GM12878 (cell line): ENCODE measurements at regions of chr17 and their contacts with region 1.

Region 1: DNA sequence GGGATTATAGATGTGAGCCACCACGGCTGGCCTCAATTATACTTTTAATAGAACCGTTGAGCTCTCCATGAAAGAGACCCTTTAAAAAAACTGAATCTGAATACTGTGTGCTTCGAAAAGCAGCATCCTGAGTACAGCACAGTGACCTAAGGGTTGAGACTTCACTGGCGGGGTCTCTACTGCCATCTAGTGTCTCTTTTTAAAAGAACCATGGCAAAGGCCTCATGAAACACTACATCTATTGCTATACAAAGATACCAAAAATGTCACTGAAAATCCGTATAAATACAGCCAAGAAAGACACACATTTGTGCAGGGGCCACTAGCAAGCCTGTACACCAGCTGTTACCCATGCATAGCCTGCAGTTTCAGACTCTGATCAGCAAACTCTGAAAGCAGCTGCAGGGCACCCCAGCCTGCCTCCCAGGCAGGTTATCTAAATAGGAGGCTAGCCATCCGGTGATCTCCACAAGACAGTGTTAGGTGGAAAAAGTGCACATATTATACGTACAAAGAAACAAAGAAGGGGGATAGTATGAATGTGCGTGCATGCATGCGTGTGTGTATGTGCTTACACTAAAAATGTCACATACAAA is 35.3 kb downstream of the NPLOC4 start:
- DNase-seq: peak; percentile 20
- ATAC-seq: peak; percentile 83
- H3K4me3 ChIP-seq: no peak overlapping the region
- H3K27ac ChIP-seq: no peak overlapping the region
- H3K4me1 ChIP-seq: peaks cover 13% of the 10 kb centered on the region
- H3K27me3 ChIP-seq: no peaks in the 10 kb centered on the region
- CTCF ChIP-seq: peak; percentile 72 to 85 (median 73)
- EP300 ChIP-seq: no peak
- POLR2A ChIP-seq: no peak
- RAD21 ChIP-seq: peak; percentile 73

Region 2: GRCh38 chr17:81253358-81254131 is 348.1 kb before region 1 on chr17:
- CTCF ChIA-PET with region 1: interaction called, 10 read pairs
- POLR2A ChIA-PET with region 1: no interaction called
- RAD21 ChIA-PET with region 1: interaction called, 3 read pairs
- SMC1A ChIA-PET with region 1: interaction called, 4 read pairs
- in situ Hi-C with region 1: no loop called
- intact Hi-C with region 1: loop called (anchors 5 kb)
- DNase-seq: no peak
- ATAC-seq: peak; percentile 81
- H3K4me3 ChIP-seq: no peak overlapping the region
- H3K27ac ChIP-seq: no peak overlapping the region
- H3K4me1 ChIP-seq: no peaks in the 10 kb centered on the region
- H3K27me3 ChIP-seq: no peaks in the 10 kb centered on the region
- CTCF ChIP-seq: peak; percentile 60 to 85 (median 72)
- EP300 ChIP-seq: no peak
- POLR2A ChIP-seq: no peak
- RAD21 ChIP-seq: peak; percentile 70

Region 3: DNA sequence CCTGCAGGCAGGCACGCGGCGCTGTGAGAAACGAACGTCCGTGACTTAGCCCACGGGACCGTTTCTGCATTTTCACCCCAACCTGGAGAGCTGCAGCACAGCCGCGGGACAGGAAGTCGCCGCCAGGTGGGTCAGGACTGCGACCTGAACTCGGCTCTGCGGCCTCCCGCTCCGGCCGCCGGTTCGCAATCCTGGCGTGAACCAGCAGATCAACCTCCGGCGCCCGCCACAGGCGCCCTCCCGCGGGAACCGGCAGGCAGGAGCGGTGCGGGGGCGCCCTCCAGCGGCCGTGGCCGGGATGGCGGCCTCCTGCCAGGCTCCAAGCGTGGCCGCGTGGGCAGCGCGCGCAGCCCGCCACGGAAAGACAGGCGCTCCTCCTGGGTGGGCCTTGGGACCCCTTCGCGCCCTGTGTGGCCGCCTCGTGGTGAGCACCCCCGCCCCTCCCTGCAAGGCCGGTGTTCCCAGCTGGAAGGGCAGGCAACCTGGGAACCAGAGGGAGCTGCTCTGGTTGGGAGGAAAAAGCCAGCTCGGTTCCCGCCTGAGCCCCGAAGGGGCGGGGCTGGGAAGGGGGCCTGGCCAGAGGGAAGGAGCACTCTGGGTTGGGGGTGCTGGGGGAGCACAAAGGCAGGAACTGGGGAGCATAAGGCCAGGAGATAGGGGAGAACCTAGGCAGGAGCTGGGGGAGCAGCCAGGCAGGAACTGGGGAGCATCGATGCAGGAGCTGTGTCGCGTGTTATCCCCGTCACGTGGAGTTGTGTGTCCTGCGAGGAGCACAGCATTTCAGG is 117.2 kb before region 1 on chr17:
- CTCF ChIA-PET with region 1: interaction called, 28 read pairs
- POLR2A ChIA-PET with region 1: no interaction called
- RAD21 ChIA-PET with region 1: interaction called, 9 read pairs
- SMC1A ChIA-PET with region 1: interaction called, 21 read pairs
- in situ Hi-C with region 1: no loop called
- intact Hi-C with region 1: no loop called
- DNase-seq: peak; percentile 17
- ATAC-seq: peak; percentile 85
- H3K4me3 ChIP-seq: peak overlapping the region; percentile 46; the same call in 1 of the 2 replicates
- H3K27ac ChIP-seq: no peak overlapping the region
- H3K4me1 ChIP-seq: peaks cover 12% of the 10 kb centered on the region
- H3K27me3 ChIP-seq: peaks cover 7 to 8% of the 10 kb centered on the region in 2 experiments; a peak in 3 of 4 replicates
- CTCF ChIP-seq: peak; percentile 84 to 99 (median 94); a peak in 5 of 6 replicates
- EP300 ChIP-seq: no peak
- POLR2A ChIP-seq: no peak
- RAD21 ChIP-seq: peak; percentile 94

Region 4: DNA sequence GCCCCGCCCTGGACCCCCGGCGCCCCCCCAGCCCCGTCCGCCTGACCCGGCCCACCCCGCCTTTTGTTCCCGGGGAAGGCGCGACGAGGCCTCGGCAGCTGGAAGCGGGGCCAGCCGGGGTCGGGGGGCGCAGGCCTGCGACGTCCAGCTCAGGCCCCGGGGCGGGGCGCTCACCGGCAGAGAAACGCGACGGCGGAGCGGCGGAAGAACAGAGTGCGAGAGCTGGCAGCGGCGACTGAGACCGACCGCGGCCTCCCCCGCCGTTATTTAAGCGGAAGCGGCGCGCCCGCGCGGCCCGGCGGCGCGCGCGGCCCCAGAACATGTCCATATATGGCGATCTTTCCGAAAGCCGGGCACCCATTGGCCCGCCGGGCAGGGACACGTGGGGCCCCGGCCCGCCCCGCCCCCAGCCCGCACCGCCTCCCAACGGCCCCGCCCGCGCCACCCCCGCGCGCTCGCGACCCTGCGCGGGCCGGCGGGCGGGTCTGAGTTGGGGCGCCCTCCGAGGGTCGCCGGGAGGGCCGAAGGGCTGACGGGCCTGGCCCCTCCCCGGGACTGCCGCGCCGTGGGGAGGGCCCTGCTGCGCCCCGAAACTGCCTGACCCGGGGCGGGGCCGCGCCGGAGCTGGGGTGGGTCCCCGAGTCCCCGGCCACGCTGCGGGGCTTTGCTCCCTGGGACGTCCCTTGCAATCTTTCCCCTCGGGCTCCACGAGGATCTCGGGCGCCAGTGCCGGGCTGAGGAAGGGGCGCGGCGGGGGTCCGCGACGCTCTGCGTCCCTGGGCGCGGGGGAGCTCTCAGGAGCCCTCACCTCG is 88.9 kb before region 1 on chr17 and contains the start of gene ACTG1:
- CTCF ChIA-PET with region 1: interaction called, 47 read pairs
- POLR2A ChIA-PET with region 1: interaction called, 8 read pairs
- RAD21 ChIA-PET with region 1: interaction called, 44 read pairs
- SMC1A ChIA-PET with region 1: interaction called, 15 read pairs
- in situ Hi-C with region 1: no loop called
- intact Hi-C with region 1: loop called (anchors 5 kb)
- DNase-seq: no peak
- ATAC-seq: peak; percentile 25
- H3K4me3 ChIP-seq: peak within 1 kb of the TSS; percentile 95
- H3K27ac ChIP-seq: peak within 1 kb of the TSS; percentile 100
- H3K4me1 ChIP-seq: peaks cover 12% of the 10 kb centered on the region
- H3K27me3 ChIP-seq: no peaks in the 10 kb centered on the region
- CTCF ChIP-seq: no peak
- EP300 ChIP-seq: no peak
- POLR2A ChIP-seq: peak; percentile 89
- RAD21 ChIP-seq: no peak
- polyA plus RNA-seq, gene ACTG1: 969 to 1,906 TPM

Region 5: DNA sequence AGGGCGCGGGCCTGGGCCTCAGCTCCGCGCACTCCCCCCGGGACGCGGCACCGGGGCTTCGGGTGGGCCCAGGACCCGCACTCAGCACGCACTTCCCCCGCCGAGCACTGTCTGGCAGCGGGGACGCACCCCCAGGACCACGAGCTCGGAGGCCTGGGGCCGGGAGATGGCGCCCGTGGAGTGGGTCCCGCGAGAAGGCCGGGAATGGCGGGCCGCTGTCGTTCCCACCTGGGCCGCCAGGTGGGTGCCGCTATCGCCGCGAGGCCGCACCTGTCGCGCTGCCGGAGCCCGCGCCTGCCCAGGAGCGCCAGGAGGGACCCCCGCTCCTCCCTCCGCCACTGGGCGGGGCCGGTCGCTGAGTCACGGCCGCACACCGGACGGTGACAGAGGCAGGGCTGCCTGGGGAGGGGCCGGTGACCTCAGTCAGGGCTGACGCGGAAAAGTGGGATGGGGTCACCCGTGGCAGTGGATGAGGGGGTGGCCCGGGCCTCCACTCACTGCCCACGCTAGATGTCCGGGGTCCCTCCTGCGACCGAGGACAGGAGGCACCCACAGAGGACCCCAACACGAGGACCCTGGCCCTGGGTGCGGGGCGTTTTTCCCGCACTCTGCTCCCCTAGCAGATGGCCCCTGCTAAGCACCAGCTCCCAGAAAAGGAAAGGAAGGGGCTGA is 82.2 kb before region 1 on chr17:
- CTCF ChIA-PET with region 1: interaction called, 47 read pairs
- POLR2A ChIA-PET with region 1: interaction called, 8 read pairs
- RAD21 ChIA-PET with region 1: interaction called, 44 read pairs
- SMC1A ChIA-PET with region 1: interaction called, 15 read pairs
- in situ Hi-C with region 1: no loop called
- intact Hi-C with region 1: loop called (anchors 5 kb)
- DNase-seq: no peak
- ATAC-seq: peak; percentile 39
- H3K4me3 ChIP-seq: peak overlapping the region; percentile 72
- H3K27ac ChIP-seq: peak overlapping the region; percentile 100
- H3K4me1 ChIP-seq: peaks cover 33% of the 10 kb centered on the region
- H3K27me3 ChIP-seq: no peaks in the 10 kb centered on the region
- CTCF ChIP-seq: peak; percentile 50 to 64 (median 61)
- EP300 ChIP-seq: no peak
- POLR2A ChIP-seq: peak; percentile 68
- RAD21 ChIP-seq: no peak

Region 6: DNA sequence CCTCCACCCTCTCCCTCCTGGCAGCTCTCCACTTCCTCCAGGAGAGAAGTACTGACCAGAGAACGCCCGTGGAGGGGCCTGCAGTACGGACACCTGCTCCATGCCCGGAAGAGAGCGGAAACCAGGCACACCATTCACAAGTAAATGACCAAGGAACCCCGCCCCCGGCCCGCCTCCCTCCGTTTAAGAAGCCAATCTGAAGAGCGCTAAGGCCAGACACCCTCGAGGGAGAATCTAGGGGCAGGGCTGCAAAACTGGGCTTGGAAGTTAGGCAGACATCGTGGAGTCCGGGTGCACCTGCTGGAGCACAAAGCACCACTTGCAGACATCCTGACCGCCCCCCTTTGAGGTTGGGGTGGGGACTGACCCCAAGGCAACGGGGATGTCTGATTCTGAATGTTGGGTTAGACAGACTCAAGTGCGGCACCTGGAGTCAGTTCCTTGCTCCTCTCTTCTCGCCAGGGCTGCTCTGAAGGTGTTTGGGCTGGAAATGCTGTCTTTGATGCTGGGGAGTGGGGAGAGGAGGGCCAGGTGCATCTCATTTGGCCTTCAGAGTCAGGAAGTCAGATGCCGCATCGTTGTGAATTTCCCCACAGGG is 48.5 kb before region 1 on chr17:
- CTCF ChIA-PET with region 1: interaction called, 13 read pairs
- POLR2A ChIA-PET with region 1: interaction called, 7 read pairs
- RAD21 ChIA-PET with region 1: interaction called, 11 read pairs
- SMC1A ChIA-PET with region 1: interaction called, 3 read pairs
- in situ Hi-C with region 1: no loop called
- intact Hi-C with region 1: no loop called
- DNase-seq: peak; percentile 53
- ATAC-seq: peak; percentile 86
- H3K4me3 ChIP-seq: peak overlapping the region; percentile 93
- H3K27ac ChIP-seq: peak overlapping the region; percentile 58
- H3K4me1 ChIP-seq: peaks cover 14% of the 10 kb centered on the region
- H3K27me3 ChIP-seq: no peaks in the 10 kb centered on the region
- CTCF ChIP-seq: peak in 2 of 3 experiments; percentile 20 to 40; a peak in 3 of 6 replicates
- EP300 ChIP-seq: no peak
- POLR2A ChIP-seq: 0 out of 2 replicates have a peak, but pooled peaks have one; percentile 36
- RAD21 ChIP-seq: peak; percentile 12; the same call in 1 of the 2 replicates

Region 7: GRCh38 chr17:81561494-81561885 is 40.1 kb before region 1 on chr17:
- CTCF ChIA-PET with region 1: interaction called, 7 read pairs
- POLR2A ChIA-PET with region 1: interaction called, 5 read pairs
- RAD21 ChIA-PET with region 1: interaction called, 10 read pairs
- SMC1A ChIA-PET with region 1: interaction called, 9 read pairs
- in situ Hi-C with region 1: no loop called
- intact Hi-C with region 1: no loop called
- DNase-seq: no peak
- ATAC-seq: peak; percentile 8; the same call in 2 of the 3 replicates
- H3K4me3 ChIP-seq: no peak overlapping the region
- H3K27ac ChIP-seq: peak overlapping the region; percentile 64
- H3K4me1 ChIP-seq: peaks cover 22% of the 10 kb centered on the region
- H3K27me3 ChIP-seq: no peaks in the 10 kb centered on the region
- CTCF ChIP-seq: no peak
- EP300 ChIP-seq: no peak
- POLR2A ChIP-seq: no peak
- RAD21 ChIP-seq: no peak